Naive thymus-derived CD4-positive, alpha-beta T cell (primary cell): ENCODE measurements at regions of chr22 and their contacts with region 1.

Region 1: GRCh38 chr22:50551160-50551752 is 5.6 kb downstream of the KLHDC7B start:
- DNase-seq: no peak
- ATAC-seq: no peak
- H3K4me3 ChIP-seq: no peak overlapping the region
- H3K4me3 Mint-ChIP-seq: peak overlapping the region in 8 of 10 donors; percentile 32 to 88 (median 50)
- H3K27ac ChIP-seq: no peak overlapping the region
- H3K27ac Mint-ChIP-seq: peak overlapping the region in 6 of 9 donors; percentile 25 to 87 (median 70)
- H3K4me1 ChIP-seq: peaks cover 14 to 22% of the 10 kb centered on the region in 2 donors
- H3K4me1 Mint-ChIP-seq: peaks cover 16 to 22% (median 17%) of the 10 kb centered on the region in 7 donors
- H3K27me3 ChIP-seq: no peaks in the 10 kb centered on the region
- H3K27me3 Mint-ChIP-seq: peaks cover 0 to 5% (median 0%) of the 10 kb centered on the region in 5 donors

Region 2: DNA sequence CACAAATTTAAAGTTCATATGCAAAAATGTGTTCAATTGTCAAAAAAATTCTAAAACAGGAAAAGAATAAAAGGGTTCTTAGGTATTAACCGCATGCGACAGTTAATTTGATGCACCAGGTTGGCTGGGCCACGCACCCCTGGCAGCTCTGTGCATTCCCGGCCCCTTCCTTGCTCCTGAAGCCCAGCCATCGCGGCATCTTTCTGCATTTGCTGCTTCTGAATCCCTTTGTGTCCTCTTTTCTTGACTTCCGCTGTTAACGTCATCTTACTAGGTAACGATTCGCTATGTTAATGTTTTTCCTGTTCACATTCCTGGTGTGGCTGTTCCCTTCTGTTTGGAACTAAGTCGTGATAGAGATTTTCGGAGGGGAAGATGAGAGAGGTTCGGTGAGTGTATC is 13.5 kb before region 1 on chr22:
- CTCF ChIA-PET with region 1: interaction called, 7 read pairs
- POLR2A ChIA-PET with region 1: interaction called, 57 read pairs
- intact Hi-C with region 1: loop called (anchors 1 kb)
- DNase-seq: no peak
- ATAC-seq: no peak
- H3K4me3 ChIP-seq: no peak overlapping the region
- H3K4me3 Mint-ChIP-seq: peak overlapping the region in 4 of 10 donors; percentile 5 to 65 (median 56)
- H3K27ac ChIP-seq: peak overlapping the region; percentile 99
- H3K27ac Mint-ChIP-seq: peak overlapping the region; percentile 74 to 100 (median 99)
- H3K4me1 ChIP-seq: peaks cover 14 to 24% of the 10 kb centered on the region in 2 donors
- H3K4me1 Mint-ChIP-seq: peaks cover 29 to 79% (median 41%) of the 10 kb centered on the region in 7 donors
- H3K27me3 ChIP-seq: no peaks in the 10 kb centered on the region
- H3K27me3 Mint-ChIP-seq: peaks cover 0 to 2% (median 0%) of the 10 kb centered on the region in 5 donors